B cell (primary cell): ENCODE measurements at regions of chr14 and their contacts with region 1.

Region 1: DNA sequence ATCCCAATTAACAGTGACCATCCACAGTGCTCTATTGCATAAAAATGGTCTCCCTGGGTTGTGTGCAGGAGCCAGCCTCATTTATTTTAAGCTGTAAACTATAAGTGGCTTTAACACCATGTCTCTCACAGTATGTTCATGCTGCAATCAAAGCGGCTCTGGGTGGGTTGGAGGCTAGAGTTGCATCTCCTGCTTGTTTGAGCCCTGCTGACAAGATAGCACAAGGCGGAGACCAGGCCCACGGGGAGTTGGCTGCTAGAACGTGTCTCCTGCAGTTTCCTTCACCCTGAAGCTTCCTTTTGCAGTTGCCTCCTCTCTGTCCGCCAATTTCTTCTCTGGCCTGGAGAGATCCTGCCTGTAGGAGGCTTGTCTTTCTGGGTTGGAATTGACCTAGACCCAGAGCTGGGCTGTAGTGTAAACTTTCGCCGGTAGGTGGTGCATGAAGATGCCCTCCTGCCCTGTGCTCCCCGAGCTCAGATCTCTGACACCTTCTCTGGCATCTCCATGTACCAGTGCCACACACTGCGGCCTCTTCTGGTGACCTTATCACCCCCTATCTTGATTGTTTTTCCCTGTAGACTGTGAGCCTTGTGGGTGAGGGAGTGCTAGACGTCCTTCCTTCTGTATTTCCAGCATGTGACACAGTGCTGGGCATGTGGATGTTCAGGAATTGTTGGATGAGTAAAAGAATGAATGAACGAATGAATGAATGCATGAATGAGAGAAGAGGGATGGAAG is 10.3 kb downstream of the OTUB2 start:
- DNase-seq: peak; percentile 78
- ATAC-seq: peak; percentile 93
- H3K4me3 ChIP-seq: no peak overlapping the region
- H3K4me3 Mint-ChIP-seq: no peak overlapping the region
- H3K27ac ChIP-seq: no peak overlapping the region
- H3K27ac Mint-ChIP-seq: no peak overlapping the region
- H3K4me1 ChIP-seq: no peaks in the 10 kb centered on the region
- H3K4me1 Mint-ChIP-seq: peaks cover 2% of the 10 kb centered on the region
- H3K27me3 ChIP-seq: no peaks in the 10 kb centered on the region
- H3K27me3 Mint-ChIP-seq: no peaks in the 10 kb centered on the region
- CTCF ChIP-seq: peak; percentile 87

Region 2: GRCh38 chr14:94021001-94021400 is 15.5 kb before region 1 on chr14:
- CTCF ChIA-PET with region 1: interaction called, 34 read pairs
- POLR2A ChIA-PET with region 1: interaction called, 3 read pairs
- intact Hi-C with region 1: no loop called
- DNase-seq: no peak
- ATAC-seq: no peak
- H3K4me3 ChIP-seq: no peak overlapping the region
- H3K4me3 Mint-ChIP-seq: no peak overlapping the region
- H3K27ac ChIP-seq: no peak overlapping the region
- H3K27ac Mint-ChIP-seq: no peak overlapping the region
- H3K4me1 ChIP-seq: peaks cover 5% of the 10 kb centered on the region in 2 donors
- H3K4me1 Mint-ChIP-seq: peaks cover 4% of the 10 kb centered on the region
- H3K27me3 ChIP-seq: peaks cover 0 to 19% (median 7%) of the 10 kb centered on the region in 4 experiments
- H3K27me3 Mint-ChIP-seq: peaks cover 39% of the 10 kb centered on the region
- CTCF ChIP-seq: no peak

Region 3: DNA sequence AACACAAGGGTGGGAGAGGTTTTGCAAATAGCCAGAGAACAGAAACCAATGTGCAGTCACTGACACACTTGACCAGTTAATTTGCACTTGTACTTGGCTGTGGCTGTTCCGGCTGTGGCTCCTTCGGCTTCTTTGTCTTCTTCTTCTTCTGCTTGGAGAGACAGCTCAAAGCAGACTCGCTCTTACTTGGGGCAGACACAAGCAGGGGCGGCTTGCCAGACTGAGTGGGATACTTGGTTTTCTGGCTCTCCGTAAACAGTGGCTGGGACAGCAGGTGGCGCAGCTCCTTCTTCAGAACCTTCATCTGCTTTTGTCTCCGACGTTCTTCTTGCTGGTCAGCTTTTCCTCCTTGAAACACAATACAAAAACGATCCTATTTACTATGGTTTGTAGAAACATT is 14.6 kb after region 1 on chr14:
- CTCF ChIA-PET with region 1: interaction called, 37 read pairs
- POLR2A ChIA-PET with region 1: no interaction called
- intact Hi-C with region 1: no loop called
- DNase-seq: no peak
- ATAC-seq: no peak
- H3K4me3 ChIP-seq: no peak overlapping the region
- H3K4me3 Mint-ChIP-seq: no peak overlapping the region
- H3K27ac ChIP-seq: no peak overlapping the region
- H3K27ac Mint-ChIP-seq: no peak overlapping the region
- H3K4me1 ChIP-seq: no peaks in the 10 kb centered on the region
- H3K4me1 Mint-ChIP-seq: no peaks in the 10 kb centered on the region
- H3K27me3 ChIP-seq: no peaks in the 10 kb centered on the region
- H3K27me3 Mint-ChIP-seq: no peaks in the 10 kb centered on the region
- CTCF ChIP-seq: peak; percentile 8

Region 4: GRCh38 chr14:94066089-94066676 is 29.7 kb after region 1 on chr14:
- CTCF ChIA-PET with region 1: interaction called, 10 read pairs
- POLR2A ChIA-PET with region 1: no interaction called
- intact Hi-C with region 1: no loop called
- DNase-seq: no peak
- ATAC-seq: no peak
- H3K4me3 ChIP-seq: no peak overlapping the region
- H3K4me3 Mint-ChIP-seq: no peak overlapping the region
- H3K27ac ChIP-seq: no peak overlapping the region
- H3K27ac Mint-ChIP-seq: peak overlapping the region; percentile 32
- H3K4me1 ChIP-seq: peaks cover 0 to 3% of the 10 kb centered on the region in 2 donors
- H3K4me1 Mint-ChIP-seq: peaks cover 60% of the 10 kb centered on the region
- H3K27me3 ChIP-seq: no peaks in the 10 kb centered on the region
- H3K27me3 Mint-ChIP-seq: no peaks in the 10 kb centered on the region
- CTCF ChIP-seq: no peak

Region 5: GRCh38 chr14:94129111-94129757 is 92.8 kb after region 1 on chr14 and contains the start of gene IFI27L2:
- CTCF ChIA-PET with region 1: interaction called, 195 read pairs
- POLR2A ChIA-PET with region 1: interaction called, 6 read pairs
- intact Hi-C with region 1: no loop called
- DNase-seq: peak; percentile 80
- ATAC-seq: peak; percentile 98
- H3K4me3 ChIP-seq: peak within 1 kb of the TSS; percentile 57 to 85 (median 65)
- H3K4me3 Mint-ChIP-seq: peak within 1 kb of the TSS; percentile 94
- H3K27ac ChIP-seq: peak within 1 kb of the TSS; percentile 35 to 44
- H3K27ac Mint-ChIP-seq: peak within 1 kb of the TSS; percentile 68
- H3K4me1 ChIP-seq: peaks cover 12 to 18% of the 10 kb centered on the region in 2 donors
- H3K4me1 Mint-ChIP-seq: peaks cover 14% of the 10 kb centered on the region
- H3K27me3 ChIP-seq: peaks cover 0 to 4% (median 0%) of the 10 kb centered on the region in 4 experiments
- H3K27me3 Mint-ChIP-seq: peaks cover 10% of the 10 kb centered on the region
- CTCF ChIP-seq: peak; percentile 45
- total RNA-seq, gene IFI27L2: 30.2 and 31.4 TPM in 2 replicates

Region 6: DNA sequence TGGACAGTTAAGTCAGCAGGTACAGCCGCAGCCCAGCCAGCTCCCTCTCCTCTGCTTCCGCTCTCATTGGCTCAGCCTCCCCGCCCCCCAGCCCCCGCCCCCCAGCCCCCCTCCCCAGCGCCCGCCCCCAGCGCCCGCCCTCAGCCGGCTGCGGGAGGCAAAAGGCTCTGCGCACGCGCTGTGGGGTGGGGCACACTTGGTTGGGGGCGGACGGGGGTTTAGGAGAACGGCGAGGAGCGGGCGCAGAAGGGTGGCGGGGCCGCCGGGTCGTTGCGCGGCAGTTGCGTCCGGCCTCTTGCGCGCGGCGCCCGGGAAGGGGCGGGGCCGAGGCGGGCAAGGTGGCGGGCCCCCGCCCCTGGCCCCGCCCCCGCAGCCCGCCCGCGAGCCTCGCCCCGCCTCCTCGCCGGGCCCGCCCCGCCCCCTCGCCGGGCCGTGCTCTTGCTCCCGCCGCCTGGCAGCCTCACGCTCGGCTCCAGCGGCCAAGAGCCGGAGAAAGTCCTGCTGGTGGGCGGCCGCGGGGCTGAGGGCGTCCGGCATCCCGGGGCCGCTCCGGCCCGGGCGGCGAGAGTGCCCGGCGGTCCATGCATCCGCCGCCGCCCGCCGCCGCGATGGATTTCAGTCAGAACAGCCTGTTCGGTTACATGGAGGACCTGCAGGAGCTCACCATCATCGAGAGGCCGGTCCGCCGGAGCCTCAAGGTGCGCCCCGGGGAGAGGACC is 137.6 kb after region 1 on chr14 and contains the start of gene PPP4R4:
- CTCF ChIA-PET with region 1: interaction called, 154 read pairs
- POLR2A ChIA-PET with region 1: no interaction called
- intact Hi-C with region 1: no loop called
- DNase-seq: peak; percentile 82
- ATAC-seq: peak; percentile 92
- H3K4me3 ChIP-seq: peak within 1 kb of the TSS in 4 of 5 experiments; percentile 46 to 66 (median 61)
- H3K4me3 Mint-ChIP-seq: peak within 1 kb of the TSS; percentile 88
- H3K27ac ChIP-seq: no peak within 1 kb of the TSS
- H3K27ac Mint-ChIP-seq: peak within 1 kb of the TSS; percentile 50
- H3K4me1 ChIP-seq: peaks cover 17 to 19% of the 10 kb centered on the region in 2 donors
- H3K4me1 Mint-ChIP-seq: peaks cover 15% of the 10 kb centered on the region
- H3K27me3 ChIP-seq: peaks cover 0 to 49% (median 35%) of the 10 kb centered on the region in 4 experiments
- H3K27me3 Mint-ChIP-seq: peaks cover 50% of the 10 kb centered on the region
- CTCF ChIP-seq: no peak
- total RNA-seq, gene PPP4R4: not detected in 2 replicates